ENCODE measurements at regions of chr21 and their contacts with region 1.

Region 1: DNA sequence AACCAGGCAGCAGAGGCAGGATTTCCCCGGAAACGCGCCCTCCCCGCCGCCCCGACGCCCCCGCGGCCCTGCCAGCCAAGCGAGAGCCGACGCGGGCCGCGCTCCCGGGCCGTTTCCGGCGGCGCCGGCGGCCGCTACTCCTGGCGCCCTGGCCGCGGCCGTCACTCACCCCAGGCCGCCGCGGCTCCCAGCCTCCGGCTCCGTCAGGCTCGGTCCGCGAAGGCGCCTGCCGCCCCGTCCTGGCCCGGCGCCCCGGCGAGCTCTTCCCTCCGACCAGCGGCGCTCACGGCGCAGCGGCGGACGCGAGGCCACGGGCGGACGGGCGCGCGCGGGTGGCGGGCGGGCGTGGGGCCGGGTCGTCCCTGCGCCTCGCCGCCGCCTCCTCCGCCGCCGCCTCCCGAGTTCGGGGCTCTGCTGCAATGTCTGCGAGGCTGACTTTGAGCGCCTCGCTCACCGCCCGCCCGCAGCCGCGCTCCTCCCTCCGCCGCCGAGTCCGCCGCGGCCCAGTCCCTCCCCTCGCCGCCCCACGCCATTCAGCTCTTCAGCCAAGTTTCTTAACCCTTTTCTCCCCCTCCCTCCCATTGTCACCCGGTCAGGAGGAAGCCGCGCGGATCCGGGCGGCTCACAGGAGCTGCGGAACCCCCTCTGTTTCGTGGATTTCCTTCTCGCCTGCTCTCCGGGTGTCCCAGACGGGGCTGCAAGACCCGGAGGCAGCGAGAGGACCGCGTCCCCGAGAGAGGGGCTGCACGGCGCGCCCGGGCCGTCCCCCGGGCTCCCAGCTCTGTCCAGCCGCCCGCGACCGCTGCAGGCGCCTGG is at the start of gene NRIP1:
- DNase-seq: peak; percentile 95
- ATAC-seq: peak; percentile 94
- total RNA-seq, gene NRIP1: 15.4 TPM

Region 2: GRCh38 chr21:15001857-15002606 is 62.8 kb before region 1 on chr21:
- intact Hi-C with region 1: loop called (anchors 10 kb)
- DNase-seq: no peak
- ATAC-seq: no peak

Region 3: GRCh38 chr21:15206514-15206913 is 141.7 kb after region 1 on chr21:
- intact Hi-C with region 1: loop called (anchors 10 kb)
- DNase-seq: no peak
- ATAC-seq: no peak

Region 4: DNA sequence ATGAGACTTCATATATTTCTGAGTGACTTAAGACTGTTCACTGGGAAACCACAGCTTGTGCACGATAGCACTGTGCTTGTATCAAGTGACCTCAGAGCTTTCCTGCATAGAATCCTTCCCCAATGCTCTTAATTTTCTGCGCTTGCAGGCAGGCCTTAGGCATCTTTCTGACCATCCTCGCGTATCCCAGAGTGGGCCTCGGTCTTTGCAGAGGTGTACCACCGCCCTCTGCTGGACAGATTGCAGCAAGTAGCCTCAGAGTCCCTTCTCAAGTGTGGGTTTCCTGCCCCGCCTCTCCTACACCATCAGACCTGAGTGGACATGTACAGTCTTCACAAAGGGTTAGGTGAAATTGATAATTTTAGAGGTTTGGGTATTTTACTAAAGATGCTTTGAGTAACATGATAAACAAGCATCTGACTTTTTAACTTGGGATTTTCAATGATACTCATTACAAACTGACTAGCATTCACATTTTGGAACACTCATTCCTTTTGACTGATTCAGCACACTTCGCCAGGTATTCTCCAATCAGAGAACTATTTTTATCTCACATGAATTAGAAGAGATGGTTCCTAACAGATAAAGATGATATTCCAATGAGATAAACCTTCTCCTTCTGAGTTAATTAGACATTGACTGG is 418.5 kb after region 1 on chr21:
- intact Hi-C with region 1: loop called (anchors 5 kb)
- DNase-seq: peak; percentile 88
- ATAC-seq: peak; percentile 100